ENCODE measurements at regions of chr2 and their contacts with region 1.

Region 1: DNA sequence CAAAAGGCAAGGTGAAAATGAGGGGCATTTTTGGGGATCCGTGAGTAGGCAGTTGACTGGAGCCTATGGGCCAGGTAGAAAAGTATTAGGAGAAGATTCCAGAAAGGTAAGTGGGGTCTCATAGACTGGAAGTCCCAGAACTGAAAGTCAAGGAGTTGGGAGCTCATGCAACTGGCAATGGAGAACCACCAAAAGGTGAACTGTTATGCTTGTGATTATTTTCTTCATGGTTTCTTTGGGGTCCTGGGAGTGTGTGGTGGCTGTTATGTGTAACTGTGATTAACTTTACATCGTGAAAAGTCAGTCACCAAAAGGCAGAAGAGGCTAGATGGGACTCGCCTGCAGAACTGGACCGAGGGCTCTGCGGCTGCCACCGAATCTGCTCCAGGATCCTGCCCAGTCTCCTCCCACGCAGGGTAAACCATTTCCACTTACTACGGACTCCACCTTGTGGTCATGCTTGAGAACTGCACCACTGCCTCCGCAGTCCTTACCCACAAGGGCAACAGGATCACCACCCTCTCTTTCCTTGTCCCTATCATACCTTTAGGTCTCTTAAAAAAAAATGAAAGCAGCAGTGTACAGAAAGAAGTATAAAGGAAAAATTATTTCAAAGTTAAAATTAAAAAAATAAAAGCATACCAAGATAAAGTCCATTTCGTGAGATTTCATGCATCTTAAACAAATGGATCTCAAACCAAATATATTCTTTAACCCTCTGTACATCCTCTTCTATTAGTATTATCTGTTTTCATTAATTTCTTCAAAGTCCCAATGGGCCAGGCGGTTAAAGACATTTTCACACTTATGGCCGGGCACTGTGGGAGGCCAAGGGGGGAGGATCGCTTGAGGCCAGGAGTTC is 15.6 kb upstream of the CEP68 start:
- DNase-seq: peak; percentile 64
- CTCF ChIP-seq: peak; percentile 85

Region 2: GRCh38 chr2:64586883-64587481 is 453.6 kb before region 1 on chr2:
- in situ Hi-C with region 1: loop called (anchors 25 kb)
- DNase-seq: peak; percentile 30
- CTCF ChIP-seq: peak; percentile 61

Region 3: GRCh38 chr2:64605026-64605471 is 435.6 kb before region 1 on chr2:
- in situ Hi-C with region 1: no loop called
- DNase-seq: no peak
- CTCF ChIP-seq: no peak

Region 4: DNA sequence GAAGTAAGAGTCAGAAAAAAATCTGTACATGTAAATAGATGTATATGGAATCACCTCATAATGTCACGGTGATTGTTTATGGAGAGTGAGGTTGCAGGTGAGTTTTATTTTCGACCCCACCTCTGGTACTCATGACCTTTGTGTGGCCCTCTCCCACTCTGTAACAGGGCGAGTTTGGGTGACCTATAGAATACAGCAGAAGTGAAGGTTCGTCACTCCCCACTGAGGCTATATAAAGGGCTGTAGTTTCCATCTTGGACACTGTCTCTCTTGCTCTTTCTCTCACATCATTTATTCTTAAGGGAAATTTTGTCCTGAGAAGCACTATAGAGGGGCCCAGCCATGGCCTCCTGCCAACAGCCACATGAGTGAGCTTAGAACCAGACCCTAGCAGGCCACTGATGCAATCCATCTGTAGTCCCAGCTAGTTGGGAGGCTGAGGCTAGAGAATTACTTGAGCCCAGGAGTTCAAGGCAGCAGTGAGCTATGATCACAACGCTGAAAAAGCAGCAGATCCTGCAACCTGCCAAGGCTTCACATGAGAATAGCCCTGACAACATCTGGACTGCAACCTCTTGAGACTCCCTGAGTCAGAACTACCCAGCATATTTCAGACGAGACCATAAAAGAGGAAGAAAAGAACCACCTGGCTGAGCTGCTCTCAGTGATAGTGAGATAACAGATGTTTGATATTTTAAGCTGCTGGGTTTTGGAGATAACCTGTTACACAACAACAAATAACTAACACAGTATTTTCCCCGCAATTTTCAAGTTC is 125.7 kb before region 1 on chr2:
- in situ Hi-C with region 1: loop called (anchors 25 kb)
- DNase-seq: peak; percentile 68
- CTCF ChIP-seq: no peak

Measured in GM13977 (cell line).